ENCODE measurements at regions of chr2 and their contacts with region 1.

Region 1: DNA sequence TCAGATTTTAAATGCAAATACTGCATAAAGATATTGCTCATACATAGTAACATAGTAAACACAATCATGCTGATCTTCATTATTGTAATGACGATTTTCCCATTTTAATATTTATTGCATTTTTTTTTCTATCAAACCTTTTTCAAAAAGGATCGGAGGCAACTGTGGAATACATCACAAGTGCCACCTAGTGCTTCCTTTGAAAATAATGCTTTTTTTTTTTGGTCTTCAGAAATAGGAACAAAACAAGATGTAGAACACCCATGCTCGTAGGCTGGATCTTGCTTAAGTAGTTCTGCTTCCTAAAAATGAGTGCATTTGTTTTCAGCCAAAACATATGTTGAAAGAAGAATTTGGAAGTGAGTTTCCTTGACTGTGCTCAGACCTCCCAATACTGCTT is 35.7 kb upstream of the GPR155 start:
- DNase-seq: peak; percentile 35
- ATAC-seq: no peak
- H3K4me3 ChIP-seq: no peak overlapping the region
- H3K27ac ChIP-seq: no peak overlapping the region
- H3K4me1 ChIP-seq: no peaks in the 10 kb centered on the region
- H3K27me3 ChIP-seq: peaks cover 40% of the 10 kb centered on the region
- CTCF ChIP-seq: peak; percentile 59; the same call in 1 of the 2 replicates

Region 2: DNA sequence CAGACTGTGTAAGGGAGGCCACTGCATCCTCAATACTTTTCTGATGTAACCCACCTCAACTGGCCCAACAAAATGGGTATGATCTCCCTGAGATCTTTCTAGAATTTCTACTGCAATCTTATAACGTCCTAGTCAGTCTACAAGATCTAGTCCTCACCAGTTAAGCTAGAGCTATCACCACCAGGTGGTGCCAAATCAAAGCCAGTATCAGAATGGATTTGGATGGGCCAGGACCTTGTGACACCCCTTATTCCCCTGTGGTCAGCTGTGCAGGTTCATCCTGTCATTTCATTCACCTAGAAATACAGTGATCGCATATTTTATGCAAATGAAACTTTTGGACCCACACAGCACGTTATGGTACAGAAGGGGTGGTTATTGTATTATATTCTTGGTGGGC is 364.6 kb before region 1 on chr2:
- CTCF ChIA-PET with region 1: no interaction called
- POLR2A ChIA-PET with region 1: no interaction called
- intact Hi-C with region 1: loop called (anchors 5 kb)
- DNase-seq: peak; percentile 70
- ATAC-seq: peak; percentile 88
- H3K4me3 ChIP-seq: no peak overlapping the region
- H3K27ac ChIP-seq: no peak overlapping the region
- H3K4me1 ChIP-seq: no peaks in the 10 kb centered on the region
- H3K27me3 ChIP-seq: no peaks in the 10 kb centered on the region
- CTCF ChIP-seq: peak; percentile 87

Region 3: DNA sequence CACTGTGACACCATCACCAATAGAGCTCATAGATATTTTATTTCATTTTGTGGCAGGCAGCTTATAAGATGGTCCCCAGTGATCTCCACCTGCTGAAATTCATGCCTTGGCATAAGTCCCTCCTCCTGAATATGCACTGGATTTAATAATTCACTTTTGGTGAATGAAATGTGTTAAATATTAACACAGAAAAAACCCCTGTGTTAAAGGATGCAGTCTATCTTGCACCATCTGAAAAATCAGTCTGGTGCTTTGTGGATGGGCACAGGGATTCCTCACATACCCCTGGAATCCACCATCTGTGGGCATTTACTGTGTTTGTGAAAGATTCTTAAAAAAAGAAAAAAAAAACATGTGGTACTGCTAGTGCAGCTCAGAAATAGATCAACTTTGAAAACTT is 101.1 kb after region 1 on chr2:
- CTCF ChIA-PET with region 1: no interaction called
- POLR2A ChIA-PET with region 1: no interaction called
- intact Hi-C with region 1: no loop called
- DNase-seq: no peak
- ATAC-seq: no peak
- H3K4me3 ChIP-seq: no peak overlapping the region
- H3K27ac ChIP-seq: no peak overlapping the region
- H3K4me1 ChIP-seq: no peaks in the 10 kb centered on the region
- H3K27me3 ChIP-seq: 0 out of 2 replicates have a peak, but pooled peaks cover 7% of the 10 kb centered on the region
- CTCF ChIP-seq: no peak

Measured in PC-3 (cell line).